ENCODE measurements at regions of chr9 and their contacts with region 1.

Region 1: GRCh38 chr9:37329576-37329975 is 92.9 kb upstream of the GRHPR start:
- DNase-seq: peak; percentile 50
- ATAC-seq: peak; percentile 40; the same call in 1 of the 2 replicates
- H3K4me3 ChIP-seq: no peak overlapping the region
- H3K27ac ChIP-seq: no peak overlapping the region
- H3K4me1 ChIP-seq: no peaks in the 10 kb centered on the region
- H3K27me3 ChIP-seq: no peaks in the 10 kb centered on the region
- CTCF ChIP-seq: peak; percentile 46
- POLR2A ChIP-seq: no peak
- RAD21 ChIP-seq: peak; percentile 62

Region 2: DNA sequence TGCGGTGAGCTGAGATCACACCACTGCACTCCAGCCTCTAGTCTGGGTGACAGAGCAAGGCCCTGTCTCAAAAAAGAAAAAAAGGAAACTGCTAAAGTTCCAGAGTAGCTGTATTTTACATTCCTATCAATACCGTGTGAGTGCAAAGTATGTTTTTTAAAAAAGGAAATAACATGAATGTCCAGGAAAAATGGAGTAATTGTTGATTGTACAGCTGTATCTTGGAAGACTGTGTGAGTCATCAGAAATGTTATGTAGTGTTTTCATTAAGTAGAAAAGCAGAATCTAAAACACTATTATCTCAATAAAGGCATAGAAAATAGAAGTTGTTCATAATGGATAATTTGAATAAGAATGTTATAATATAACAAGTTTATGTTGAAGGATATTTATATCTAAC is 155.3 kb before region 1 on chr9:
- CTCF ChIA-PET with region 1: no interaction called
- POLR2A ChIA-PET with region 1: no interaction called
- dilution Hi-C with region 1: no loop called
- in situ Hi-C with region 1: no loop called
- intact Hi-C with region 1: no loop called
- DNase-seq: peak; percentile 81
- ATAC-seq: peak; percentile 89
- H3K4me3 ChIP-seq: no peak overlapping the region
- H3K27ac ChIP-seq: peak overlapping the region; percentile 72; the same call in 1 of the 2 replicates
- H3K4me1 ChIP-seq: peaks cover 4% of the 10 kb centered on the region
- H3K27me3 ChIP-seq: no peaks in the 10 kb centered on the region
- CTCF ChIP-seq: no peak
- POLR2A ChIP-seq: no peak
- RAD21 ChIP-seq: no peak

Region 3: DNA sequence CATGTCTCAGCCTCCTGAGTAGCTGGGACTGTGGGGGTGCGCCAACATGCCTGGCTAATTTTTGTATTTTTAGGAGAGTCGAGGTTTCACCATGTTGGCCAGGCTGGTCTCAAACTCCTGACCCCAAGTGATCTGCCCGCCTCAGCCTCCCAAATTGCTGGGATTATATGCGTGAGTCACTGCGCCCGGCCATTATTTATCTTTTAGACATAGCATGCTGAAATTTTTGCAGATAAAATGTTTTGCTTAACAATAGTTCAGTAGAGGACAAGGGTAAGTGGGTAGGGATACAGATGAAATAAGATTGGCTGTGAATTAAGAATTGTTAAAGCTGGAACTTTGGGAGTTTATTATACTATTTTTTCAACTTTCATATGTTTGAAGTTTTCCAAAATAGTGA is 57.9 kb before region 1 on chr9:
- CTCF ChIA-PET with region 1: no interaction called
- POLR2A ChIA-PET with region 1: no interaction called
- dilution Hi-C with region 1: no loop called
- in situ Hi-C with region 1: no loop called
- intact Hi-C with region 1: loop called (anchors 10 kb)
- DNase-seq: peak; percentile 11
- ATAC-seq: peak; percentile 59; the same call in 1 of the 2 replicates
- H3K4me3 ChIP-seq: no peak overlapping the region
- H3K27ac ChIP-seq: no peak overlapping the region
- H3K4me1 ChIP-seq: no peaks in the 10 kb centered on the region
- H3K27me3 ChIP-seq: no peaks in the 10 kb centered on the region
- CTCF ChIP-seq: no peak
- POLR2A ChIP-seq: no peak
- RAD21 ChIP-seq: no peak

Region 4: GRCh38 chr9:37622462-37622861 is 292.9 kb after region 1 on chr9:
- CTCF ChIA-PET with region 1: no interaction called
- POLR2A ChIA-PET with region 1: no interaction called
- dilution Hi-C with region 1: no loop called
- in situ Hi-C with region 1: no loop called
- intact Hi-C with region 1: no loop called
- DNase-seq: peak; percentile 32
- ATAC-seq: no peak
- H3K4me3 ChIP-seq: no peak overlapping the region
- H3K27ac ChIP-seq: no peak overlapping the region
- H3K4me1 ChIP-seq: peaks cover 4% of the 10 kb centered on the region
- H3K27me3 ChIP-seq: peaks cover 5% of the 10 kb centered on the region
- CTCF ChIP-seq: no peak
- POLR2A ChIP-seq: no peak
- RAD21 ChIP-seq: no peak

Measured in IMR-90 (cell line).